Activated CD4-positive, alpha-beta memory T cell treated with anti-CD3 and anti-CD28 coated beads for 36 hours (primary cell): ENCODE measurements at regions of chr6 and their contacts with region 1.

Region 1: DNA sequence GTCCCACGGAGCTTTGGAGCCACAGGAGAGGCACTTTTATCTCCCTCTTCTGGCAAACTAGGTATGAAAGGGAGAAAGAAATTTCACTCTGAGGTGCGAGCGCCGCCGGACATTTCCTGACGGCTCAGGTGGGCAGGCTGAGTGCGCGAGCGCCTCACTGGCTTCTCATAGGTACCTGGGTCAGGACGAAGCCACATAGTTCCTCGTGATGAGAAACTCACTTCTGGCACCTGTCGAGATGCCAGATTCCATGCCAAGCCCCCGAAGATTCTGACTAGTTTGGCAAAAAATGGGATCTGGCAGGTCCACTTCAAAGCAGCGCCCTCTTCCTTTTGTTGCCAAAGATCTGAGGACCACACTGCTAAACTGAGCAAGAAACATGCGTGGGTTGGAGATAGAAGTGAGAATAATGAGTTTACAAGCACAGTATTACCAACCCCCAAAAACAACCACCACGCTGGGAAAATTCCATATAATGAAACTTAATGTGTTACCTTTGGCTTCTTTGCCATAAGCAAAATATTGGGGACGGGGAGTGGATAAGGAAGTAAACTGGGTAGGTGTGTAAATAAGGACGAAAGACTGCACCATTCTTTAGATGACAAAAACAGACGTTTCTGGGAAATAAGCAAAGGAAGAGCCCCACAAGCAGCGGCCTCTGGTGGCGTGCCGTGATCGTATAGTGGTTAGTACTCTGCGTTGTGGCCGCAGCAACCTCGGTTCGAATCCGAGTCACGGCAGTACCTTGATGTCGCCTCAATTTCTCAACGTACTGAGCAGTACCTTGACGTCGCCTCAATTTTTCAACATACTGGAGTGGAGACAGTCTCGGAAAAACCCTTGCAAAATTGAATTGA is 89.8 kb upstream of the PRSS16 start:
- DNase-seq: peak; percentile 91
- H3K4me3 Mint-ChIP-seq: peak overlapping the region; percentile 66
- H3K27ac Mint-ChIP-seq: peak overlapping the region; percentile 77
- H3K4me1 Mint-ChIP-seq: peaks cover 45% of the 10 kb centered on the region
- H3K27me3 Mint-ChIP-seq: no peaks in the 10 kb centered on the region

Region 2: DNA sequence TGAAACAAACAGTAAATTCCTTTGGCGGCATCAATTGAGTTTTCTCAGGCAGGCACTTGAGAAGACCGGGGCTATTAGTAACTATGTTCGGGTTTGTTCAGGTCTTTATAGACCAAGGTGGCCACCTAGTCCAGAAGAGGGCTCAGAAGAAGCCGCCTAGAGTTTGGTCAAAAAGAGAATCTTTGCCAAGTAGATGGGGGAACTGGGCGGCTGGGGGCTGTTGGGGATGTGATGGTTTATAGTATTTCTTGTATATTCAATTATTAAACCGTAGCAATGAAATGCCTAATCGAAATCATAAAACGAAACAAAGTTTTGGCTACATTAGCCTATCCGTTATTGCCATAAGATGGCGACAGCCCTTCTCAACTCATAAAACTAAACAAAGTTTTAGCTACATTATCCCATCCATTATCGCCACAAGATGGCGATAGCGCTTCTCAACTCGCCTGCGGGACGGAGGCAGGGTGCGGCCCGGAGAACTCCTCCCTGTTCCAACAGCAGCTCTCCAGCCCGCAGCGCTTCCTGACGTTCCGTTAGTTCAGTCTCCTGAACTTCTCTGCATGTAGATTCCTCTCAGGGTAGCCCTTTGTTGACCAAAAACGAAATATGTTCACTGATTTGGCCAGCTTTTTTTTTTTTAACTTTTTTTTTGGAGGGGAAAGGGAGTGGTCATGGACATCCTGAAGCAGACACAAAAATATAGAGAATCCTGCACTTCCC is 30.7 kb before region 1 on chr6:
- CTCF ChIA-PET with region 1: interaction called, 19 read pairs
- POLR2A ChIA-PET with region 1: interaction called, 16 read pairs
- intact Hi-C with region 1: loop called (anchors 1 kb)
- DNase-seq: peak; percentile 88
- H3K4me3 Mint-ChIP-seq: peak overlapping the region; percentile 71
- H3K27ac Mint-ChIP-seq: peak overlapping the region; percentile 65
- H3K4me1 Mint-ChIP-seq: peaks cover 19% of the 10 kb centered on the region
- H3K27me3 Mint-ChIP-seq: no peaks in the 10 kb centered on the region

Region 3: DNA sequence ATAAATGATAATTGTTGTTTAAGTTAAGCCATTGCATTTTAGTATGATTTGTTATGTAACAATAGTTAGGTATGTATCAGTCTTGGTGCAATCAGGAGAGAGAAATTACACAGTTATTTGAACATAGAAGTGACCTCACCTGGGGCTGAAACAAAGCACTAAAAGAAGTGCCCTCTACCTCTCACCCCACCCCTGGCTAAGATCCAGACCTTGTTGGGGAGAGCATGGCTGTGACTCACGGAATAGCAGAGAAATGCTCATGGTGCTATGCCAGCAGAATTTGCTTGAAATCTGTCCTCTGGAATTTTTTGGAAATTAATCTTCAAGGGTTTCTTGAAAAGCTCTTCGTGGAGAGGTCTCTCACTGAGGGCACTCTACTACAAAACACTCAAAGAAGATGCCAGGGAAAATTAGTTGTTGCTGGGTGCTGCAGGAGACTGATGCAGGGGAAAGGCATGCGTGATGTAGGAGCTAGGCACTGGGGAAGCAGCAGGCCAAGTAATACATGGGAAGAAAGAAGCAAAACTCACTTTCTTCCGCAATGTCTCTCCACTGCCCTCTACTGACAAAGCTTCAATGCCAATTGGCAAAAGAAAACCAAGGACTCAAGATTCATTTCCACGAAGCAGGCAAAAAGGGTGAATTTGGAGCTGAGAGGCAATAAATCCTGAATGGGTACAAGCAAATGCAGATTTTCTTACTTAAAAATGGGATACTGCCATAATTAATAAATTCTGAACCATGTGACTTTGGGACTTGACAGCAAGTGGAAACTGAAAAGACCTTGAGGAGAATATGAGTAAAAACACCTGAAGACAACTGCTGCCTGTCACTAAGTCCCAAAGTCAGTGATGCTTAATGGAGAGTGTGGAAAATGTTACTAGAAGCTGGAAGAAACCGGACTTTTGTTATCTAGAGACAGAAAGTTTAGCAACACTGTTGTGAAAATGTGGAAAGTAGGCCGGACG is 451.5 kb after region 1 on chr6:
- CTCF ChIA-PET with region 1: interaction called, 3 read pairs
- POLR2A ChIA-PET with region 1: no interaction called
- intact Hi-C with region 1: loop called (anchors 10 kb)
- DNase-seq: peak; percentile 16
- H3K4me3 Mint-ChIP-seq: no peak overlapping the region
- H3K27ac Mint-ChIP-seq: no peak overlapping the region
- H3K4me1 Mint-ChIP-seq: peaks cover 9% of the 10 kb centered on the region
- H3K27me3 Mint-ChIP-seq: peaks cover 36% of the 10 kb centered on the region